ENCODE measurements at regions of chr1 and their contacts with region 1.

Region 1: DNA sequence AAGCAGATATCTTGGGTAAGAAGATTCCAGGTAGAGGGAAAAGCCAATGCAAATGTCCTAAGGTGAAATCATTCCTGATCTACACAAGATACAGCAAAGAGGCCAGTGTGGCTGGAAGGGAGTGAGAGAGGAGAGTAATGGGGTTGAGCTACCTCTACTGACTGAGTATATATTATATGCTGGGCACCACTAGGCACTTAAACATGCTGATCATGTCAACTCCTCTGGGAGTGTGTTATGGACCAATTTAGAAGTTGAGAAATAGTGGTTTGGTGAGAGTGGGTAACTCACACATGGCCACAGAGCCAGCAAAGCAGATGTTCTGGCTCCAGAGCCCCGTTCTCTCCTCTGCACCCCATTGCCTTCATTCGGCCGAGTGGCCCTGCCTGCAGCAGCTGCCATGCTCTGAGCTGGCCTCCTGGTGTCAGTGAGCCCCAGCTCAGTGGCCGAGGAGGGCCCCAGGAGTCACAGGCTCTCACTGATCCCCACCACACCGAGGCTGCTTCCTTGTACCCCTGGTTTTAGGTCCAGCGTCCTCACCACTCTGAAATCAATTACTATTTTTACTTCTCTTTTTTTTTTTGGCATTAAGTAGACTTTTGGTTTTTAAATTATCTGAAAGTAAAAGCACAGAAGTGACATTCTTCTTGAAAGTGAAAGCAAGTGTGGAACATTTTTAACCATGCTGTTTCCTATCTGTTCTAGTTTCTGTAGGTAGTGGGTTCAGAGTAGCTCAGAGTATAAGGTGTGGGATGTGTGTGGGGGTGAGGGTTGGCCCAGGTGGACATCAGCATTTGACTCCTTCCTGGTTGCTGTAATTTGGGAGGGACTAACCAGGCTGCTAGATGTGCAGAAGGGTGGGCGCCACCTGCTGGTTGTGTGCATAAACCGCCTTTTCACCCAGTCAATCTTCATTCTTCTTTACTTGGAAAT is 45.8 kb upstream of the CRNN start:
- DNase-seq: peak; percentile 70 to 77 (median 75)
- ATAC-seq: peak; percentile 68
- H3K4me3 ChIP-seq: no peak overlapping the region
- H3K27ac ChIP-seq: no peak overlapping the region
- H3K4me1 ChIP-seq: no peaks in the 10 kb centered on the region
- H3K27me3 ChIP-seq: no peaks in the 10 kb centered on the region
- CTCF ChIP-seq: peak; percentile 45 to 77 (median 63)
- POLR2A ChIP-seq: no peak

Region 2: GRCh38 chr1:152141974-152142584 is 317.8 kb before region 1 on chr1:
- intact Hi-C with region 1: loop called (anchors 10 kb)
- DNase-seq: peak; percentile 60 to 79 (median 74)
- ATAC-seq: peak; percentile 47
- H3K4me3 ChIP-seq: no peak overlapping the region
- H3K27ac ChIP-seq: no peak overlapping the region
- H3K4me1 ChIP-seq: no peaks in the 10 kb centered on the region
- H3K27me3 ChIP-seq: no peaks in the 10 kb centered on the region
- CTCF ChIP-seq: peak; percentile 43 to 82 (median 73)
- POLR2A ChIP-seq: no peak